Heart right ventricle (tissue), 16 donors: ENCODE measurements at regions of chr5 and their contacts with region 1.

Region 1: GRCh38 chr5:99032234-99033013 is 103.6 kb upstream of the CHD1 start:
- DNase-seq: peak in 1 of 2 donors; percentile 76
- ATAC-seq: peak in 7 of 8 donors; percentile 83 to 90 (median 85)
- H3K4me3 ChIP-seq: peak overlapping the region in 8 of 10 donors; percentile 6 to 51 (median 38)
- H3K27ac ChIP-seq: peak overlapping the region in 9 of 10 donors; percentile 5 to 88 (median 56)
- H3K4me1 ChIP-seq: peaks cover 0 to 47% (median 8%) of the 10 kb centered on the region in 9 donors
- H3K27me3 ChIP-seq: no peaks in the 10 kb centered on the region
- CTCF ChIP-seq: peak; percentile 56 to 92 (median 79)

Region 2: GRCh38 chr5:98905857-98906690 is 126.3 kb before region 1 on chr5:
- intact Hi-C with region 1: loop called (anchors 1 to 5 kb)
- DNase-seq: no peak
- ATAC-seq: peak in 3 of 8 donors; percentile 35 to 67 (median 56)
- H3K4me3 ChIP-seq: no peak overlapping the region
- H3K27ac ChIP-seq: peak overlapping the region in 1 of 10 donors; percentile 18
- H3K4me1 ChIP-seq: peaks cover 0 to 43% (median 22%) of the 10 kb centered on the region in 9 donors
- H3K27me3 ChIP-seq: no peaks in the 10 kb centered on the region
- CTCF ChIP-seq: peak; percentile 70 to 89 (median 75)

Region 3: GRCh38 chr5:98940581-98940980 is 91.8 kb before region 1 on chr5:
- intact Hi-C with region 1: no loop called
- DNase-seq: peak in 1 of 2 donors; percentile 34
- ATAC-seq: peak; percentile 35 to 73 (median 57)
- H3K4me3 ChIP-seq: no peak overlapping the region
- H3K27ac ChIP-seq: peak overlapping the region in 8 of 10 donors; percentile 36 to 75 (median 54)
- H3K4me1 ChIP-seq: peaks cover 7 to 69% (median 54%) of the 10 kb centered on the region in 9 donors
- H3K27me3 ChIP-seq: no peaks in the 10 kb centered on the region
- CTCF ChIP-seq: no peak

Region 4: GRCh38 chr5:98965226-98965625 is 67.2 kb before region 1 on chr5:
- intact Hi-C with region 1: no loop called
- DNase-seq: no peak
- ATAC-seq: no peak
- H3K4me3 ChIP-seq: no peak overlapping the region
- H3K27ac ChIP-seq: no peak overlapping the region
- H3K4me1 ChIP-seq: no peaks in the 10 kb centered on the region
- H3K27me3 ChIP-seq: no peaks in the 10 kb centered on the region
- CTCF ChIP-seq: no peak